AG04449 (cell line): ENCODE measurements at regions of chr3 and their contacts with region 1.

Region 1: GRCh38 chr3:61936344-61936937 is 375.1 kb downstream of the PTPRG start:
- DNase-seq: no peak
- H3K4me3 ChIP-seq: no peak overlapping the region
- CTCF ChIP-seq: peak; percentile 62

Region 2: GRCh38 chr3:61483997-61484396 is 452.4 kb before region 1 on chr3:
- CTCF ChIA-PET with region 1: no interaction called
- POLR2A ChIA-PET with region 1: no interaction called
- DNase-seq: no peak
- H3K4me3 ChIP-seq: no peak overlapping the region
- CTCF ChIP-seq: no peak

Region 3: DNA sequence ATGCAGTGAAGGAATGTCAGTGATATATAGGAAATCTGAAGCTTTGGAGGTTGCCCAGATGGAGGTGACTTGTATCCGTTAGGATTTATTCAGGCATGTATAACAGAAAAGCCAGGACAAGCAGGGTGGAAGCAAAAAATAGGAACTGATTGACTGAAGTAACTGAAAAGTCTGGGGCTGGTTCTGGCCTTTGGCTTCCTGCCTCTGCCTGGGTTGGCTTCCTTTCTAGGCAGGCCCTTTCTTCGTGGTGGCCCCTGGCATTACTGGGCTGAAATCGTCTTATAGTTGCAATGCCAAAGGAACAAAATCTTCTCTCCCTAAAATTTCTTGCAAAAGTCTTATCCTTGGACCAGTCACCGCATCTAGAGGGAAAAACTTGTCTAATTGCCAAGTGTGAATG is 11.0 kb after region 1 on chr3:
- CTCF ChIA-PET with region 1: interaction called, 32 read pairs
- POLR2A ChIA-PET with region 1: no interaction called
- DNase-seq: no peak
- H3K4me3 ChIP-seq: no peak overlapping the region
- CTCF ChIP-seq: no peak

Region 4: DNA sequence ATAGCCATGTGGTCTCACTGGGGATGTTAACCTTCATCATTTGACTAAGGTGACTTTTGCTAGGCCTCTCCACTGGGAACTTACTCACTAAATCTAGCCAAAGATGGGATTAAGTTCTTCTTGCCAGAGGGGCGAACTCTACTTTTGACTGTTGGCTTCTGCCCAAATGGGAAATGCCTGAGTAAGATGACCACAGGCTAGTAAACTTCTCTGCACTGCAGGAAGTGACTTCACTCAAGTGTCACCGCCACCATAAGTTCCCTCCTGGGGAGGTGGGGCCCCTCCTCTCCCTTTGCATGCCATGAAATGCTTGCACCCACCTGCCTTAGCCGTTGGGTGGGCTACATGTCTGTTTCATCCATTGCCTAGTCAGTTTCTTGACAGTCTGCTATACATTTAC is 48.6 kb after region 1 on chr3:
- CTCF ChIA-PET with region 1: no interaction called
- POLR2A ChIA-PET with region 1: no interaction called
- DNase-seq: peak; percentile 9
- H3K4me3 ChIP-seq: no peak overlapping the region
- CTCF ChIP-seq: no peak